Calu3 (cell line): ENCODE measurements at regions of chr3 and their contacts with region 1.

Region 1: DNA sequence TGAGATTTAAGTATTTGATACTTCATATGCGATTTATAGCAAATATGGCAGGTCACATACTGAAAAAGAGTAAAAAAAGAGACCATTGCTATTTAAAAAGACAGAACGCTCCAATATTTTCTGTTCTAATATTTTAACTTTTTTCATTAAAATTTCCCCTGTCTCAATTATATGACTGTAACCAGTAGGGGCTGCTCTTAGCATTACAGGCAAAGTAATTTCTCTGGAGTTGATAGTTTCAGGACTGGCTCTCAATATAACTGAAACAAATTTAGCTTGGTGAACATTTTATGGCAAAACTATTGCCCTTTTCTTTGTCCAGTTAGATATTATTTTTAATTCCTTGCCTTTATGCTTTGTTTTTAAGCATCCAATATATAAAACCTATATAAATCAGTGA is 286.3 kb upstream of the ROBO2 start:
- DNase-seq: no peak
- H3K4me3 Mint-ChIP-seq: no peak overlapping the region
- H3K27ac Mint-ChIP-seq: no peak overlapping the region
- H3K4me1 Mint-ChIP-seq: peaks cover 12% of the 10 kb centered on the region
- H3K27me3 Mint-ChIP-seq: no peaks in the 10 kb centered on the region
- CTCF ChIP-seq: no peak

Region 2: DNA sequence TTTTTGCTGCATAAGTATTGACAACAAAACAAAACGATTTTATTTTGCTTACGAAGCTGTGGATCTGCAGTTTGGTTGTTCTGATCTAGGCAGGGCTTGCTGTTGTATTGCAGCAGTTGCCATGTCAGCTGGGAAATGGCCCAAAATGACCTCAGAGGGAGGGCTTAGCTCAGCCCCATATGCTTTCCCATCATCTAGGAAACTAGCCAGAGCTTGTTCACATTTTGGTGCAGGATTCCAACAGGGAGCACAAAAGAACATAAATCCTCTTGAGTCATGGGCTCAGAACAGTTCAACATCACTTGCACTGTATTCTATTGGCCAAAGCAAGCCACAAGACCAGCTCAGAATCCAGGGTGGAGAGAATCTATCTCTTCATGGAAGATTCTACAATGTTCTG is 244.1 kb after region 1 on chr3:
- CTCF ChIA-PET with region 1: no interaction called
- intact Hi-C with region 1: no loop called
- DNase-seq: no peak
- H3K4me3 Mint-ChIP-seq: no peak overlapping the region
- H3K27ac Mint-ChIP-seq: no peak overlapping the region
- H3K4me1 Mint-ChIP-seq: no peaks in the 10 kb centered on the region
- H3K27me3 Mint-ChIP-seq: no peaks in the 10 kb centered on the region
- CTCF ChIP-seq: no peak

Region 3: DNA sequence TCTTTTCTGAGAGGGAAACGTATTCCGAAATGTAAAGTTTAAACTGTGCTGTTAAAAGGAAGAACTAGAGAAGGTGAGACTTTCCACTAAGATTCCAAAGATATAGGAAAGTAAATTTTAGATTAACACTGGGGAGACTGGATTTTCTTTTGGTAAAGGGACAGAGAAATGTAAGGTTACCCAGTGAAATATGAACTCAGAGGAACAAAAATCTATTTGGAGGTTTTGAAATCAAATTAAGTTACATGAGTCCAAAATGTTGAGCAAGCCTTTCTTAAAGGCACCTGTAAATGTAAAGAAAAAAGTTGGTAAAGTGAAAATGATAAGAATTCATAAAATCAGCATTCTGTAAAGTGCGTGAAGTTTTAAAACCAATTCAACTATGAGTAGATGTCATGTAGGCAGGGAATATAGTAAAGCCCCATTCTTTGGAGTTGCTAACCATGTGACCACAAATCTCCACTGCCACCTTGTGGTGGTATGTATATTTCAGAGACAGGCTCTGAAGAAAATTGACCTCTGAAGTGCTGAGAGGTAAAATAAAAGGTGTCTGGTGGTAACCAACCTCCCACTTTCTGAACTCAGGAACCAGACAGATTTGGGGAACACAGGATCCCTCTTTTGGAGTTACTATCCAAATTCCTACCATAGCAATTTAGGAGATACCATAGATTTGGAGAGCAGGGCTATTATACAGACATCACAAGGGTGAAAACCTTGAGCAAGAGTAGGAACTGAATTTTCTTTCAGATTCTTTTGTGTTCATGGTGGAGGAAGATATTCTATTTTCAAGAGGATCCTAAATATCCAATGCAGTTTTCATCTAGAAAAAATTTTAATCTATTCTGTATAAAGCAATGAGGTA is 501.6 kb after region 1 on chr3:
- CTCF ChIA-PET with region 1: no interaction called
- intact Hi-C with region 1: loop called (anchors 2 kb)
- DNase-seq: peak; percentile 66
- H3K4me3 Mint-ChIP-seq: no peak overlapping the region
- H3K27ac Mint-ChIP-seq: no peak overlapping the region
- H3K4me1 Mint-ChIP-seq: no peaks in the 10 kb centered on the region
- H3K27me3 Mint-ChIP-seq: no peaks in the 10 kb centered on the region
- CTCF ChIP-seq: peak; percentile 52

Region 4: GRCh38 chr3:78048698-78049097 is 1295.1 kb after region 1 on chr3:
- CTCF ChIA-PET with region 1: no interaction called
- intact Hi-C with region 1: no loop called
- DNase-seq: no peak
- H3K4me3 Mint-ChIP-seq: peak overlapping the region; percentile 53
- H3K27ac Mint-ChIP-seq: no peak overlapping the region
- H3K4me1 Mint-ChIP-seq: no peaks in the 10 kb centered on the region
- H3K27me3 Mint-ChIP-seq: no peaks in the 10 kb centered on the region
- CTCF ChIP-seq: no peak